ENCODE measurements at regions of chr4 and their contacts with region 1.

Region 1: DNA sequence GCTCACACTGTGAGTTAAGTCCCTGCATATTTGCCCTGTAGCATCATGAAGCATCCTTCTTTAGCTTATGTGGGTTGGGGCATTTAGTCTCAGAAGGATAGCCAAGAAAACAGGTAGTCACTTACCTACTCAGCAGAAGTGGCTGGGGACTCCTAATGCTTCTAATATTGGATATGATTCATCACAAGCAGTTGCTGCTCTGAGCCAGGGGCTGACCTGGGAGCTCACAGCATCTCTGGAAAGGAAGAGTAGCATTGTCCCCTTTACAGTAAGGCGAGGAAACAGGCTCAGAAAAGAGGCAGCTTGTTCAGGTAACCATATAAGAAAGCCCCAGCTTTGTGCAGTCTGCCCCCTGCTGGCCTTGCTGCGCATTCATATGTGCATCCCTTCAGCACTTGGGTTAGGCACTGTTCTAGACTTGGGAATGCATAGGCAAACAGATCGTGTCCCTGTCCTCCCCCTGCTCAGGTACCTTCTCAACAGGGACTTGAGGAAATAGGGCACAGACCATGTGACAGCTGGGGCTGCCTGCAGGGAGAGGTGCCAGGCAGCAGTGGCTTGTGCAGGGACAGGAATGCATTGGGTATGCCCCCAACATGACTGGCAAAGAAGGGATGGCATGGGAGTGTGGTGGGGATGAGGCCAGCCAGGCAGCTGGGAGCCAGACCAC is 35.7 kb upstream of the TBC1D14 start:
- DNase-seq: no peak
- H3K4me3 ChIP-seq: no peak overlapping the region
- CTCF ChIP-seq: peak; percentile 83

Region 2: DNA sequence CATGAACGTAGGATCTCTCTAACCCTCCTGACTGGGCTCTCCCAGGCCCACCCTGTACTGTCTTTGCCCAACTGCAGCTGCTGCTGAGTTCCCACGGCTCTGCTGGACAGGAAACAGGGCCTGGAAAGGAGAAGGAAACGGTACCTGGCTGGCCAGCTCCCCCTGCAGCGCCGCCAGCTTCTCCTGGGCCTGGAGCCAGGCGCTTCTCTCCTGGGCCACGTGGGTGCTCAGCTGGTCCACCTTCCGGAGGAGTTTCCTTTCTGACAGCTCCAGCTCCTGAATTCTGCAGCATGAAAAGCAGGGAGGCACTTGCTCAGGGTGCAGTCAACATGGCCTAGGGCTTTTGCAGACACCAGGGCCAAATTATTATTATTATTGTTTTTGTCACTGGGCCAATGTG is 862.2 kb before region 1 on chr4:
- CTCF ChIA-PET with region 1: no interaction called
- POLR2A ChIA-PET with region 1: no interaction called
- DNase-seq: no peak
- H3K4me3 ChIP-seq: no peak overlapping the region
- CTCF ChIP-seq: no peak

Region 3: DNA sequence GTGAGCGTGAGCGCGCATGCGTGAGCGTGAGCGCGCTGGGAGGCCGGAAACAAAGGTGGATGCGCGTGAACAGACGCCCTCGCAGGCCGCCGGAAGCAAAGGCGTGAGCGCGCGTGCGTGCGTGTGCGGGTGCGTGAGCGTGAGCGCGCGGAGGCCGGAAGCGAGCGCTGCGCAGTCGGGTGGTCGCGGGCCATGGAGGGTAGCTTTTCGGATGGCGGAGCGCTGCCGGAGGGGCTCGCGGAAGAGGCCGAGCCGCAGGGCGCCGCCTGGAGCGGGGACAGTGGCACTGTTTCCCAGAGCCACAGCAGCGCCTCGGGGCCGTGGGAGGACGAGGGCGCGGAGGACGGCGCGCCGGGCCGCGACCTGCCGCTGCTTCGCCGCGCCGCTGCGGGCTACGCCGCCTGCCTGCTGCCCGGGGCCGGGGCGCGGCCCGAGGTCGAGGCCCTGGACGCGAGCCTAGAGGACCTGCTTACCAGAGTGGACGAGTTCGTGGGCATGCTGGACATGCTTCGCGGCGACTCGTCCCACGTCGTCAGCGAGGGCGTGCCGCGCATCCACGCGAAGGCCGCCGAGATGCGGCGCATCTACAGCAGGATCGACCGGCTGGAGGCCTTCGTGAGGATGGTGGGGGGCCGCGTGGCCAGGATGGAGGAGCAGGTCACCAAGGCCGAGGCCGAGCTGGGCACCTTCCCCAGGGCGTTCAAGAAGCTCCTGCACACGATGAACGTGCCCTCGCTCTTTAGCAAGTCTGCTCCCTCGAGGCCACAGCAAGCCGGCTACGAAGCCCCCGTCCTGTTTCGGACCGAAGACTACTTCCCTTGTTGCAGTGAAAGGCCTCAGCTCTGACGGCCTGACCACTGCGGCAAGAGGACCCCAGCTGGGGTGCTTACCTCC is 157.7 kb before region 1 on chr4 and contains the start of gene BLOC1S4:
- CTCF ChIA-PET with region 1: interaction called, 308 read pairs
- POLR2A ChIA-PET with region 1: no interaction called
- DNase-seq: no peak
- H3K4me3 ChIP-seq: peak within 1 kb of the TSS; percentile 92
- CTCF ChIP-seq: peak; percentile 24

Region 4: GRCh38 chr4:6760860-6761610 is 112.9 kb before region 1 on chr4:
- CTCF ChIA-PET with region 1: interaction called, 14 read pairs
- POLR2A ChIA-PET with region 1: no interaction called
- DNase-seq: no peak
- H3K4me3 ChIP-seq: no peak overlapping the region
- CTCF ChIP-seq: no peak

Region 5: DNA sequence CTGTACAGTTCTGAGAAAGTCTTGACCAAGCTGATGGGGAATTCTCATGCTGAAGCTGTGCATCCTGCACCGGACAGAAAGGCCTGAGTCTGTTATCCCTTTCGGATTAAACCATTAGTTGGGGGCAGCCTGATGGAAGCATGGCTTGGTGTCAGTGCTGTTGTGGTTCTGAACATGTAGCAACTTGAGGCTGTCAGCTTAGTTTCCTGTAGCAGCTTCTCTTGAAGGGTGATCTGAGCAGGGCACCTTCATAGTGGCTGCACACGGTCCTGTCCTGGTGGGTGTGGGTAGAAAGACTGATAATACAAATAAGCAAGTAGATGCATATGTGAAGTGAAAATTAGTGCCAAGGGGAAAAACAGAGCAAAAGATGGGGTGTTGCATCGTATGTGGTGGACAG is 79.7 kb before region 1 on chr4:
- CTCF ChIA-PET with region 1: interaction called, 14 read pairs
- POLR2A ChIA-PET with region 1: no interaction called
- DNase-seq: no peak
- H3K4me3 ChIP-seq: no peak overlapping the region
- CTCF ChIP-seq: no peak

Region 6: DNA sequence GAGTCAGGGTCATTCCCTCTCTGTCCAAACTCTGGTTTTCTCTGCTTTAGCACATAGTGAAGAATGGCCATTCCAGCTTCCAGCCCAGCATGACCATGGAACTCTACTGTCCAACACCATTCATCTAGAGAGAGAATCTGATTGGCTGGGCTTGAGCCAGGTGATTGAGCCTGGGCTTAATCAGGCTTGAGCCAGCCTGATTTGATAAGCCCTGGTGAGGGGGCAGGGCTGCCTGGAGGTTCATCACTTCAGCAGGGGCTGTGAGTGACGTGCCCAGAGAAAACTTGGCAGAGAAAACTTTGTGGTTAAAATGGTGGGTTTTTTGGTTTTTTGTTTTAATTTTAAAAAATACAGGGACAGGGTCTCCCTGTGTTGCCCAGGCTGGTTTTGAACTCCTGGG is 28.9 kb before region 1 on chr4:
- CTCF ChIA-PET with region 1: interaction called, 23 read pairs
- POLR2A ChIA-PET with region 1: no interaction called
- DNase-seq: no peak
- H3K4me3 ChIP-seq: no peak overlapping the region
- CTCF ChIP-seq: no peak

Region 7: DNA sequence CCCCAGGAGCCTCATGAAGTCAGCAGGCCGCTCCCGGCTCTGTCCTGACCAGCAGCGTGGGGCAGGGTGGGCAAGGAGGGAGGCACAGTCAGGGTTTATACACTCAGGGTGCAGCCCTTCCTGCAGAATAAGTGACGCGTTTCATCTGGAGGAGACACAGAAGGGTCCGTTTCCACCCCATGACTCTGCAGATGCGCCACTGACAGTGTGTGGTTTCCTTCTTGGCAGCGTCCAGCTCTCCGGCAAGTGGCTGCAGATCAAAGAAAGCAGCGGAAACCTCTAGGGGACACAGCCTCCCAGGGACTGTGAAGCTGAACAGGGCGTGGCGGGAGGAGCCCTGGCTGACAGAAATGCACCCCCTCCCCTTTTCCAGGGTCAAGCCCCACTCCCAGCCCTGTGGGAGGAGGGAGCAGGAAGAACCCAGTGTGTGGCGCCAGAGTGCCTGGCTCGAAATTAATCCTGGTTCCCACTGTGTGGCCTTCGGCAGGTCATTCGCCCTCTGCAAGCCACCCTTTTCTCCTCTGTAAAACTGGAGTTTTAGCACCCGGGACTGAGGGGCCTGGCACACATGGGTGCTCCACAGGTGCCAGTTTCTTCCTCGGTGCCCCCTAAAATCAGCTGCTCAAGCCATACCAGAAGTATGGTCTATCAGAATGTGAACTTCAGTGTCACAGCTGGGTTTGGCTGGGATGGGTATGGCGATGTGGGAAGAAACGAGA is 18.4 kb after region 1 on chr4:
- CTCF ChIA-PET with region 1: interaction called, 129 read pairs
- POLR2A ChIA-PET with region 1: no interaction called
- DNase-seq: no peak
- H3K4me3 ChIP-seq: no peak overlapping the region
- CTCF ChIP-seq: peak; percentile 7